ENCODE measurements at regions of chr7 and their contacts with region 1.

Region 1: DNA sequence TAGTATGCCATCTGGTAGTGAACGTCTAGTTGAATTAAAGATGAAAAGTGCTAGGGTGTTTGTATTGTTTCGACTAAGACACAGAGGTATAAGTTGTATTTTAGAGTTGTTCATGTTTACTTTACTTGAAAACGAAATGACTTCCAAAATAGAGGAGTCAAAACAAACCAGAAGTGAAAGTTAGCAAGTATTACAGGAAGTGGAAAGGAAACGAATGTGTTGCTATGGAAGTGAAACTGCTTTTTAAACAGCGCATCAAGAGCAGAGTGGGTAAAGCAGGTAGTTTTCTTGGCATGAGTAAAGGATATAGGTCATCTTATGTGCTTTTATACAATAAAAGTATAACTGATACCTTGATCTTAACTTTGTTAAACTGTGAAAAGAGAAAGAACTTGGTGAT is 20.0 kb upstream of the GALNTL5 start:
- DNase-seq: no peak
- H3K4me3 Mint-ChIP-seq: peak overlapping the region; percentile 44
- H3K27ac Mint-ChIP-seq: peak overlapping the region; percentile 38
- H3K4me1 Mint-ChIP-seq: peaks cover 14% of the 10 kb centered on the region
- H3K27me3 Mint-ChIP-seq: peaks cover 42% of the 10 kb centered on the region

Region 2: DNA sequence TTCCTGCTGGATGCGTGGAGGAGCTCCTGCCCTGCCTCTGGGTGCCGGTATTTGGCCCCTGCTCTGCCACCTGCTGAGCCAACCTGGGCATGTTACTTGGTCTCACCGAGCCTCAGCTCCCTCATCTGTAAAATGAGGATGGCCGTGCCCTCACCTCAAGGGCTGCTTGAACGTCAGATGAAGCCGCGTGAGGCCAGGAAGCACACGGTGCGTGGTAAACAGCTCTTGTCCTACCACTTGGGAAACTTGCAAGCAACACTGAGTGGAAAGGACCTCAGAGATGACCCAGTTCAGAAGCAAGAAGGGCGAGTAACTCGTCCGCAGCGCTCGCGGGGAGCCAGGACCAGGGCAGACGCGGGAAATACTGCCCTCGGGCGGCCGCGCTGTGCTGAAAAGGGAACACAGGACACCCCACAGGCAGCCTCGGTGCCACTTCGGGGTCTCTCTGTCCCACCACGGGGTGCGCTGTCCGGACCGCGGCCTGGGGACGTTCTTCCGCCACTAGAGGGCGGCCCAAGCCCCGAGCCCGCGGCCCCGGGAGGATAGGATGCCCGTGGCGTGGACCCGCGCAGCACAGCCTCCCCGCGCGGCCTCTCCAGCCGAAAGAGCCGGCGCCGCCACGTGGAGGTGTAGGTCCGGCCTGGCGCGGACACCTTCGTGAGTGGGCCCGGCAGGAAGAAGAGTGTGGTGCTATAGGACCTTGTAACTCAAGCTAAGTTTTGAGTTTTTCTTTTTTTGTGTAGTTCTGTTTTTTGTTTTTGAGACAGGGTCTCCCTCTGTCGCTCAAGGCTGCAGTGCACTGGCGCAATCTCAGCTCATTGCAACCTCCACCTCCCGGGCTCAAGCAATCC is 153.4 kb before region 1 on chr7:
- intact Hi-C with region 1: loop called (anchors 1 kb)
- DNase-seq: peak; percentile 41
- H3K4me3 Mint-ChIP-seq: peak overlapping the region; percentile 56
- H3K27ac Mint-ChIP-seq: peak overlapping the region; percentile 29
- H3K4me1 Mint-ChIP-seq: peaks cover 5% of the 10 kb centered on the region
- H3K27me3 Mint-ChIP-seq: peaks cover 8% of the 10 kb centered on the region

Region 3: GRCh38 chr7:152145853-152146466 is 209.8 kb after region 1 on chr7:
- intact Hi-C with region 1: loop called (anchors 1 kb)
- DNase-seq: no peak
- H3K4me3 Mint-ChIP-seq: no peak overlapping the region
- H3K27ac Mint-ChIP-seq: peak overlapping the region; percentile 80
- H3K4me1 Mint-ChIP-seq: peaks cover 40% of the 10 kb centered on the region
- H3K27me3 Mint-ChIP-seq: no peaks in the 10 kb centered on the region